Sigmoid colon (tissue), 7 donors: ENCODE measurements at regions of chr22 and their contacts with region 1.

Region 1: DNA sequence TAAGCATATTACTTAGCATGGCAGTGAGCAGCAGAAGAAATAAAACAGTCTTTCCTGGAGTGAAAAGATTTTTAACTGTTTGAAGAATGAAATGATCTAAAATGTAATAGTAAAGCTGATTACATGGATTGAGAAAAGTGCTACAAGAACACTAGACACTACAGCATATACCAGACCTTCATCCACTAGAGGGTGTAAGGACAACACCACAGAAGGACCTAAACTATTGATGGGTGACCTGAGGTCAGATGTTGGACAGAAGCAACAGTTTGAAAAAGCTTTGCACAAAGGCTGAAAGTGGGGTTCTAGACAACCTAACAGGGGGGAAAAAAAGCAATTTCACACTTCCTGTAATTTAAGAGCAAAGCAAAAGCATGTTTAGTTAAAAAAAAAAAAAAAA is 97.7 kb downstream of the RBFOX2 start:
- DNase-seq: no peak
- H3K4me3 ChIP-seq: no peak overlapping the region
- H3K27ac ChIP-seq: peak overlapping the region in 2 of 4 donors; percentile 11 to 12
- H3K4me1 ChIP-seq: peaks cover 0 to 19% (median 10%) of the 10 kb centered on the region in 4 donors
- H3K27me3 ChIP-seq: no peaks in the 10 kb centered on the region
- CTCF ChIP-seq: peak; percentile 57 to 78 (median 72)
- EP300 ChIP-seq: no peak
- POLR2A ChIP-seq: no peak

Region 2: DNA sequence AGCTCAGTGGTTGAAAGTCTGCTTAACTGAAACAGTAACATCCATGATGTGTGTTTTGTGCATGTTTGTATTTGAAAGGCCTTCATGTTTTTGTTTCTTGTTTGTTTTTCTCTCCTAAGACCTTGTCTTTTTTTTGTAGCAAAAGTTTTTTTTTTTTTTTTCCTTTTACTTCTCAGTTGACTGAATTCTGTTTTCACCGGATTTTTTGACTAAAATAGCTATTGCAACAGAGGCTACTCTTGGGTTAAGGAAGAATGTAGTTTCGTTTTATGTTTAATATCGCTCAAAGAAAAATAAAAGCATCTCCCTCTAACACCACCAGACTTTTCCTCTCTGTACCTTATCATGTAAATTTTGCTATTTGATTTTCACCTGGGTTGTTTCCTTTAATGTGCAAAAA is 267.6 kb before region 1 on chr22:
- intact Hi-C with region 1: no loop called
- DNase-seq: no peak
- H3K4me3 ChIP-seq: peak overlapping the region in 3 of 4 donors; percentile 8 to 24 (median 18)
- H3K27ac ChIP-seq: peak overlapping the region; percentile 63 to 65 (median 64)
- H3K4me1 ChIP-seq: peaks cover 0 to 17% (median 8%) of the 10 kb centered on the region in 4 donors
- H3K27me3 ChIP-seq: no peaks in the 10 kb centered on the region
- CTCF ChIP-seq: no peak
- EP300 ChIP-seq: no peak
- POLR2A ChIP-seq: no peak

Region 3: DNA sequence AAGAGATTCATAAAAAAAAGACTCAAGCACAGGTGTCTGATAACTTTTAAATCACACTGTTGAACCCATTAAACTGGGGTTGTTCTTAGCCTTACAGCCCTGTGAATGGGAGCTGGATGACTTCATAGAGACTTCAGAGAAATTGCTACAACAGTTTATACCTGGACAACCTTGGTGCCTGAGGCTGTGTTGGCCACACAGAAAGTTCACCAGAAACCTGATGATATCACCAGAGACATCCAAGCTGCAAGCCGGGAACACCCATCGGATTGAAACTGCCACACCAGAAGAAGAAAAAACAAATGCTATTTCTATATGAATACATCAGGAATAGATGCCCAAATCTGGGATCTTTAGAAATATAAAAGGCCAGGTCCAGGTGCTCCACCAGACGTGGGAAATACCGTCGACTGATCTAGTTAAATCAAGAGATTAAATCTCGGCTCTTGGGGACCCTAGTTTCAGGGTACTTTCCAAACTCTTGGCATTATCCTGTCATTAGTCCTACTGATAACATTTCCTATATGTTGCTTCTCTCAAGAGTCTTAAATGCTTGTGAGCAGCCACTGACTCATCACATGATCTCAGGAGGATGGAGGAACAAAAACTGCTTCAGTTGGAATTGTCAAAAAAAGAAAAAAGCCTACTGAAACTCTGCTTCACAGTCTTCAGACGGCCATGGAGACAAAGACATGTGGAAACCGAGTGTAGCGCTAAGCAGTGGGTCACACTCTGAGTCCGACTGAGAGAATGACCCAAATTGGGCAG is 241.8 kb before region 1 on chr22:
- intact Hi-C with region 1: no loop called
- DNase-seq: no peak
- H3K4me3 ChIP-seq: no peak overlapping the region
- H3K27ac ChIP-seq: no peak overlapping the region
- H3K4me1 ChIP-seq: no peaks in the 10 kb centered on the region
- H3K27me3 ChIP-seq: no peaks in the 10 kb centered on the region
- CTCF ChIP-seq: no peak
- EP300 ChIP-seq: no peak
- POLR2A ChIP-seq: no peak

Region 4: GRCh38 chr22:35995772-35996171 is 64.8 kb after region 1 on chr22:
- intact Hi-C with region 1: no loop called
- DNase-seq: peak; percentile 95
- H3K4me3 ChIP-seq: no peak overlapping the region
- H3K27ac ChIP-seq: peak overlapping the region; percentile 76 to 86 (median 79)
- H3K4me1 ChIP-seq: peaks cover 0 to 61% (median 49%) of the 10 kb centered on the region in 4 donors
- H3K27me3 ChIP-seq: no peaks in the 10 kb centered on the region
- CTCF ChIP-seq: no peak
- EP300 ChIP-seq: peak in 2 of 4 donors; percentile 16 to 21
- POLR2A ChIP-seq: no peak

Region 5: DNA sequence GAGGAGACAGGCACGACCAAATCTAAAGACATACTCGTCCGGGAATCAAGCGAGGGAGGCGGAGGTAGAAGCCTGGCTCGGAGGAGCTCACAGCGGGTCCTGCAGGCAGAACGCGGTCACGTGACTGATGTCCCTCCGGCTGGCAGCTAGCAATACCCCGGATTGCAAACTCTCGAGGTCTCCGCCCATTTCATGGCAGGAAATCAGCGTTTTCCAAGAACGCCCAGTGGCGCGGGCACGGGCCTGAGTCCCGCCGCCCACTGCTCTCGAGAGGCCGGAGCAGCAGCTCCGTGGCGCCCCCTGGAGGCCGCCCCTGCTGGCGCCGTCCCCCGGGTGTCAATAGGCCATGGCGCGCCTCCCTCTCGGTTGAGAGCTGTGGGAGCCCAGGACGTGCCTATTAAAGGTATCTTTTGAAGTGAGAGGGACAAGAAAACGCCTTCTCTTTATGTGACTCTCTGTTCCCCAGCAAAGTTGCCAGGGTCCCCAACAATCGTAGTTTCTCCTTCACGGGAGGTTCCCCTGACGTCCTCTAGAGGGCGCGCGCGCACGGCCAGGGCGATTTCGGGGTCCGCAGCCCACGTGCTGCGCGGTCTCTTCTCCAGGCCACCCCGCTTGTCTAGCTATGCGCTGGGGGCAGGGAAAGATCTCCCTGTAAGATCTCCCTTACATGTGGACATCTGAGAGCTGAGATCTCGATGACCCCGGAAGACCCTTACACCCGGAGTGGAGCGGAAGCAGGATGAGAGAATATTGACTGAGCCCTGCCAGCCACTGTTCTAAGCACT is 135.0 kb after region 1 on chr22:
- intact Hi-C with region 1: loop called (anchors 2 kb)
- DNase-seq: peak; percentile 97
- H3K4me3 ChIP-seq: peak overlapping the region; percentile 21 to 59 (median 48)
- H3K27ac ChIP-seq: peak overlapping the region; percentile 83 to 95 (median 85)
- H3K4me1 ChIP-seq: peaks cover 0 to 20% (median 16%) of the 10 kb centered on the region in 4 donors
- H3K27me3 ChIP-seq: no peaks in the 10 kb centered on the region
- CTCF ChIP-seq: peak; percentile 100
- EP300 ChIP-seq: no peak
- POLR2A ChIP-seq: no peak